Psoas muscle (tissue), 8 donors: ENCODE measurements at regions of chr18 and their contacts with region 1.

Region 1: GRCh38 chr18:11407940-11408339 is 201.5 kb upstream of the SLC35G4 start:
- DNase-seq: no peak
- ATAC-seq: peak in 1 of 4 donors; percentile 50
- H3K4me3 ChIP-seq: no peak overlapping the region
- H3K27ac ChIP-seq: no peak overlapping the region
- H3K4me1 ChIP-seq: no peaks in the 10 kb centered on the region
- H3K27me3 ChIP-seq: no peaks in the 10 kb centered on the region
- CTCF ChIP-seq: no peak

Region 2: GRCh38 chr18:11178951-11179549 is 228.9 kb before region 1 on chr18:
- intact Hi-C with region 1: loop called in 1 of 2 experiments (anchors 10 kb)
- DNase-seq: peak; percentile 76 to 91
- ATAC-seq: peak; percentile 90 to 95 (median 92)
- H3K4me3 ChIP-seq: peak overlapping the region; percentile 45
- H3K27ac ChIP-seq: peak overlapping the region; percentile 86
- H3K4me1 ChIP-seq: peaks cover 37% of the 10 kb centered on the region
- H3K27me3 ChIP-seq: no peaks in the 10 kb centered on the region
- CTCF ChIP-seq: no peak

Region 3: DNA sequence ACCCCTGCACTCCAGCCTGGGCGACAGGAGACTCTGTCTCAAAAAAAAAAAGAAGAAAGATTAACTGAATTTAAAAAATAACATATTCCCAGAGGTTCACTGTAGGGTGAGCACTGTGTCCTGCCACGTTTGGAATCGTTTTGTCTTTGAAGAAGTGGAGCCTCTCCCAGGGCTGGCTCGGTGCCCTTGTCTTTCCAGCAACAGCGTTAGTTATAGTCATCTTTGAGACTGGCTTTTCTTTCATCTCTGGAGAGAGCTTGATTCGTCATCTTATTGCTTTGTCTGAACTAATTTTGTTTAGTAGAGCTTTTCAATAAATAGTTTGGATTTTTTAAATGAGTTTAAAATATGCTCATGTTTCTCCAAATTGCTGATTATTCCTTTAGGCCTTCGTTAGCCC is 623.9 kb after region 1 on chr18:
- intact Hi-C with region 1: no loop called
- DNase-seq: peak; percentile 77 to 81
- ATAC-seq: no peak
- H3K4me3 ChIP-seq: no peak overlapping the region
- H3K27ac ChIP-seq: peak overlapping the region; percentile 43
- H3K4me1 ChIP-seq: peaks cover 15% of the 10 kb centered on the region
- H3K27me3 ChIP-seq: no peaks in the 10 kb centered on the region
- CTCF ChIP-seq: no peak